ENCODE measurements at regions of chr11 and their contacts with region 1.

Region 1: GRCh38 chr11:114059278-114059983 is at the start of gene ZBTB16:
- DNase-seq: peak; percentile 76
- H3K4me3 Mint-ChIP-seq: peak within 1 kb of the TSS; percentile 83
- H3K27ac Mint-ChIP-seq: no peak within 1 kb of the TSS
- H3K4me1 Mint-ChIP-seq: peaks cover 8% of the 10 kb centered on the region
- H3K27me3 Mint-ChIP-seq: peaks cover 24% of the 10 kb centered on the region
- total RNA-seq, gene ZBTB16: 1.5 to 2.3 TPM

Region 2: DNA sequence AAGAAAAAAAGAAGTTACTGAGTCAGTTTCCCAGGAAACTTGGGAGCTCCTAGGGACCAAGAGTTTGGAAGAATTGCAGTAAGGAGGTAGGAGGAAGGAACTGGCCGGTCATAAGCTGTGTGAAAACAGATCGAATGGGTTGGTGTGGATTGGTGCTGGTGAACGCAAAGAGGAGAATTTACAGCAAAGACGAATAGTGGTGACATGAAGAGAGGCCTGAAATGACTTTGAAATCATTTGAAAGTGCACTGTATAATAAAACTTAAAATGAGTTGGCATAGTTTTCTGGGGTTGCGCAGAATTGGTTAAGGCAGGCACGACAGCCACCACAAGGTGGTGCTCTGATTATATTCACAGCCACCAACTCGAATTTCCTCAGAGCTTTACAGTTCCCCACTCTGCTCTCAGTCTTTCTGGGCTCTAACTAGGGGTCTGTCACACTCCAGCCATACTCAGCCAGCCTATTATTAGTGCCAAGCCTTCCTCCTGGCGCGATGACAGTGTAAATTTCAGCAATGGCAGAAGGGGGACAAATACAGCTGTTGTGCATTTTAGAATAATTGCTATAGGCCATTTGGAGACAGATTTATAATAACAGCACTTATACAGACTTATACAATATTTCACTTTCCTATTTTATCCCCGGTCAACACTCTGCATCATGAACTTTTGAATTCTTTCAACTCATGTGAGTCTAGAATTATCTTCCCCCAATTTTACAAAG is 163.1 kb before region 1 on chr11:
- CTCF ChIA-PET with region 1: no interaction called
- intact Hi-C with region 1: loop called (anchors 10 kb)
- DNase-seq: peak; percentile 54
- H3K4me3 Mint-ChIP-seq: no peak overlapping the region
- H3K27ac Mint-ChIP-seq: no peak overlapping the region
- H3K4me1 Mint-ChIP-seq: no peaks in the 10 kb centered on the region
- H3K27me3 Mint-ChIP-seq: no peaks in the 10 kb centered on the region

Region 3: DNA sequence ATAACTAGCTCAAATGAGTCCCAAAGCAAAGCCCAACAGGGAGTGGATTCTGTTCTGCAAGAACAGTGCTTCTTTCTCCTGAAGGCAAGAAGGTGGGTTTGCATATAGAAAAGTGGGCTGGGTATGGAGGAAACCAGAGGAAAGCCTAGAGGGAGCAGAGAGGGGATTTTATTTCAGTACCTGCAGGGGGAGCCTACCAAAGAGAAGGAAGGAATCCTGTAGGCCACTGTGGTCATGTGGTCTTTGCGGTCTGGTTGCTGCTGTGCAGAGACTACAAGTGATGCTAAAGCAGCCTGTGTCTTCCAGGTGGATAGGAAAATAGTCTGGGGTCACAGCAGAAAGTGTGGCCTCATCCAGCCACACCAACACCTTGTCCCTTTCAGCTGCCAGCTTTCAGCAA is 33.1 kb before region 1 on chr11:
- CTCF ChIA-PET with region 1: no interaction called
- intact Hi-C with region 1: no loop called
- DNase-seq: peak; percentile 31
- H3K4me3 Mint-ChIP-seq: no peak overlapping the region
- H3K27ac Mint-ChIP-seq: no peak overlapping the region
- H3K4me1 Mint-ChIP-seq: peaks cover 7% of the 10 kb centered on the region
- H3K27me3 Mint-ChIP-seq: no peaks in the 10 kb centered on the region

Region 4: DNA sequence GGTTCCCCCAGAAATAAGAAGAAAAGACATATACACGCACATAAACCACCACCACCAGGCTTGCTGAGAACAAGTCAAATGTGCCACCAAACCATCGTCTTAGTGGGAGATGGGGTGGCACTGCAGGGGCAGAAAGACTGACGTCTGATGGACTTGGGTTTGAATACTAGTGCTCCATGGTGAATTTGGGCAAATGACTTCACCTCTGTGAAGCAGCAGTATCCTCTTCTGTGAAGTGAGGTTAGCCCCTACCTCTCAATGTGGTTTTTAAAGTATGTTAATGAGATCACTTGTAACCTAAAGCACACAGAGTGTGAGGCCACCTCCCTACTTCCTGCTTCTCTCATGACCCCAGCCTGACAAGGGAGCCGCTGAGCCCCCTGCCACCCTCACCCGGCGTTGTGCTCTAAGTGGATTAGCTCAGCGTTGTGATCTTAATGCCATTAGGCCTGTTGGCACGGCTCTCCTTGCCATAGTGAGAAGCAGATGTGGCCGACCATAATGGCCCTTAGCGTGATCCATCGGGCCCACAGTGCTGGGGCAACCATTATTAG is 14.5 kb after region 1 on chr11:
- CTCF ChIA-PET with region 1: interaction called, 9 read pairs
- intact Hi-C with region 1: loop called (anchors 1 kb)
- DNase-seq: no peak
- H3K4me3 Mint-ChIP-seq: peak overlapping the region; percentile 20
- H3K27ac Mint-ChIP-seq: peak overlapping the region; percentile 78
- H3K4me1 Mint-ChIP-seq: peaks cover 60% of the 10 kb centered on the region
- H3K27me3 Mint-ChIP-seq: peaks cover 4% of the 10 kb centered on the region

Region 5: DNA sequence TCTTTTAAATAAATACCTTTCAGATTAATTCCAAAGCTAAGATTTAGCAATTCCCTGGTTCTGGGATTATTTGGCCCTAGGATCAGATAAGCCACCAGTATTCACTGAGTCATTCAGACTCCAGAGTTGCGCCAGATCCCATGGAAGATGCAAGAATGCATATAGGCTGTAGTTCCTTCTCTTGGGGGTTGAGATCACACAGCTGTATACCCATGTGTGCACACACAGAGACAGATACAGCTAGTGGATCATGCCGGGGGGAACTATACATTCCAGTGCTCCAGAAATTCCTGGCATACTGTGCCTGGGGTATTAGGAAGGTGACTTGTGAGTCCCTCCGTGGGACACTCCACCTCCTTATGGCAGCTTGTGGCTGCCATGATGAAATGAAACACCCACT is 75.4 kb after region 1 on chr11:
- CTCF ChIA-PET with region 1: no interaction called
- intact Hi-C with region 1: loop called (anchors 5 kb)
- DNase-seq: no peak
- H3K4me3 Mint-ChIP-seq: no peak overlapping the region
- H3K27ac Mint-ChIP-seq: no peak overlapping the region
- H3K4me1 Mint-ChIP-seq: peaks cover 44% of the 10 kb centered on the region
- H3K27me3 Mint-ChIP-seq: no peaks in the 10 kb centered on the region

Region 6: GRCh38 chr11:114159802-114160632 is 100.6 kb after region 1 on chr11:
- CTCF ChIA-PET with region 1: no interaction called
- intact Hi-C with region 1: loop called (anchors 1 kb)
- DNase-seq: peak; percentile 96
- H3K4me3 Mint-ChIP-seq: peak overlapping the region; percentile 25
- H3K27ac Mint-ChIP-seq: peak overlapping the region; percentile 50
- H3K4me1 Mint-ChIP-seq: peaks cover 78% of the 10 kb centered on the region
- H3K27me3 Mint-ChIP-seq: no peaks in the 10 kb centered on the region

Region 7: GRCh38 chr11:114192841-114193389 is 133.5 kb after region 1 on chr11:
- CTCF ChIA-PET with region 1: interaction called, 4 read pairs
- intact Hi-C with region 1: loop called (anchors 1 kb)
- DNase-seq: no peak
- H3K4me3 Mint-ChIP-seq: no peak overlapping the region
- H3K27ac Mint-ChIP-seq: no peak overlapping the region
- H3K4me1 Mint-ChIP-seq: peaks cover 17% of the 10 kb centered on the region
- H3K27me3 Mint-ChIP-seq: no peaks in the 10 kb centered on the region

Measured in activated naive CD4-positive, alpha-beta T cell treated with anti-CD3 and anti-CD28 coated beads for 36 hours (primary cell).